Endothelial cell of umbilical vein (primary cell): ENCODE measurements at regions of chr2 and their contacts with region 1.

Region 1: DNA sequence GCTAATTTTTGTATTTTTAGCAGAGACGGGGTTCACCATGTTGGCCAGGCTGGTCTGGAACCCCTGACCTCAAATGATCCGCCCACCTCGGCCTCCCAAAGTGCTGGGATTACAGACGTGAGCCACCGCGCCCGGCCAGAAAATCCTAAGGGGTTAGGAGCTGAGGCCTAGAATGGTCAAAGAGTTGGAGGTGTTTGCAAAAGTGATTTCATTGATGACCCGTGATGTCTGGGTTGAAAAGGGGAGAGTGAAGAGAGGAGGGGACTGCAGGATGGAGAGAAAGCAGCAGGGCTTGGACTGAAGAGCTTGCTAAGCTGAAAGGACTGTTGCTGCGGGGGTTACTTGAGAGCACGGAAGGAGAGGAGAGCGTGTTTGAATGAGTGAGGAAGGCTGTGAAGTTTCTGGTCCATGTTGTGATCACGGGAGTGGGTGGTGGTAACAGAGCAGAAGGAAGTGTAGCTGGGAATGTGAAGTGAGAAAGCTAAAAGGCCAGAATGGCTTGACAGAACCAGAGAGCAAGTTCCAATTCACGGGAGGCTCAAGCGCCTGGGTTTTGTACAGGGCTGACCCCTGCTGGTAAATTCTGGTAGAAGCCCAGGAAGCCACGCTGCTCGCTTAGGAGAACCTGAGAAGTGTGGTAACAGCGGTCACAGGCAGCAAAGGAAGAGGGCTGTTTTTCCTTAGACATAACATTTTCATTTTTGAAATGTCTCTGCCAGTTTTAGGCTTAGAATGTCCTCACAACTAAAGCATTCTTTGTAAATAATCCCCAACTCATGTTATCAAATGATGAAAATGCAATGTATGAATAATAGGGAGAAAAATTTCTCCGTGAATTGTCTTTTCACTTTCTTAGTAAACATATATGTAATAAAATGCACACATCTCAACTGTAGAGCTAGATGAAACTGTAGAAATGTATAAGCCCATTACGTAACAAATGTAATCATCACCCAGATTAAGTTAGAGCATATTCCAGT is 40.5 kb upstream of the ACTR2 start:
- DNase-seq: peak; percentile 90
- H3K4me3 ChIP-seq: no peak overlapping the region
- H3K27ac ChIP-seq: no peak overlapping the region
- H3K4me1 ChIP-seq: peaks cover 13% of the 10 kb centered on the region
- H3K27me3 ChIP-seq: peaks cover 4 to 6% of the 10 kb centered on the region in 2 experiments
- CTCF ChIP-seq: peak; percentile 87 to 90
- POLR2A ChIP-seq: no peak

Region 2: DNA sequence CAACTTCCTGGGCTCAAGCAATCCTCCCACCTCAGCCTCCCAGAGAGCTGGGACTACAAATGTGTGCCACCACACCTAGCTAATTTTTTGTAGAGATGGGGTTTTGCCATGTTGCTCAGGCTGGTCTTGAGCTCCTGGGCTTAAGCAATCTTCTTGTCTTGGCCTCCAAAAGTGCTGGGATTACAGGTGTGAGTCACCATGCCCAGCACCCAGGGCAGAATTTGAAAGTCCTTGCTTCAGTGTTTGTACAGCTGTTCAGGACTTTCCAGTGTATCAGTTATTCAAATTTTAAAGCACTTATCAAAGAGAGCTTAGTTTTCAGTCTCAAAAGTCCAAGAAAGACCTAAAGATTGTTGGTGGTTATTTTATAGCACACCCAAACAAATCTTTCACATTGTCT is 1124.3 kb before region 1 on chr2:
- CTCF ChIA-PET with region 1: no interaction called
- POLR2A ChIA-PET with region 1: no interaction called
- dilution Hi-C with region 1: no loop called
- intact Hi-C with region 1: no loop called
- DNase-seq: peak; percentile 65
- H3K4me3 ChIP-seq: no peak overlapping the region
- H3K27ac ChIP-seq: peak overlapping the region; percentile 99
- H3K4me1 ChIP-seq: peaks cover 24% of the 10 kb centered on the region
- H3K27me3 ChIP-seq: no peaks in the 10 kb centered on the region
- CTCF ChIP-seq: no peak
- POLR2A ChIP-seq: no peak

Region 3: DNA sequence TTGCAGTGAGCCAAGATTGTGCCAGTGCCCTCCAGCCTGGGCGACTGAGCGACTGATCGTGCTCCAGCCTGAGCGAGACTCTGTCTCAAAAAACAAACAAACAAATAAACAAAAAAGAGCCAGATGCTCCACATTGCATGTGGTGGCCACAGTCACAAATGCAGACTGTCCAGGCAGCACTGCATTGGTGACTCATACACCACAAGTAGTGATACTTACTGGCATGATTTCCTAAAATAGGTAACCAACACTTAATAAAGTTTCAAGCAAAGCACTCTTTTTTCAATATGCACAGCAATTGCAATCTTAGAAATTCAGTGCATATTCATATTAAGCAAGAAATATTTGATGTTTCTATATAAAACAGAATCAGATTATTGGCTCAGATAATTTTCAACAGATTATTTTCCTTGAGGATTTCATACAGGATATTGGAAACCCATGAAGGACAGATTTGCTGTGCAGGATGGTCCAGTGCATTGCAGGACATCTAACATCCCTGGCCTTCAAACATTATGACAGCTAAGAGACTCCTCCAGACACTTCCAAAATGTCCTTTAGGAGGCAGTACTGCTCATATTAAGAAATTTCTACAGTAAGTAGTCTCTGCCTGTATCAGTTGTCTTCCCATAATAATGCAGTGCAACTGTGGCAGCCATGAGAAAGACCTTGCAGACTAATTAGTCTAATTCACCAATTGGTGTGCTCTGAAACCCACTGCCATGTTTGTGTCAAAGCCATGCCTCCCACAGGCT is 208.5 kb before region 1 on chr2:
- CTCF ChIA-PET with region 1: interaction called, 16 read pairs
- POLR2A ChIA-PET with region 1: no interaction called
- dilution Hi-C with region 1: no loop called
- intact Hi-C with region 1: no loop called
- DNase-seq: peak; percentile 30
- H3K4me3 ChIP-seq: no peak overlapping the region
- H3K27ac ChIP-seq: no peak overlapping the region
- H3K4me1 ChIP-seq: peaks cover 7% of the 10 kb centered on the region
- H3K27me3 ChIP-seq: peaks cover 0 to 2% of the 10 kb centered on the region in 2 experiments
- CTCF ChIP-seq: peak in 1 of 2 donors; percentile 22
- POLR2A ChIP-seq: no peak

Region 4: DNA sequence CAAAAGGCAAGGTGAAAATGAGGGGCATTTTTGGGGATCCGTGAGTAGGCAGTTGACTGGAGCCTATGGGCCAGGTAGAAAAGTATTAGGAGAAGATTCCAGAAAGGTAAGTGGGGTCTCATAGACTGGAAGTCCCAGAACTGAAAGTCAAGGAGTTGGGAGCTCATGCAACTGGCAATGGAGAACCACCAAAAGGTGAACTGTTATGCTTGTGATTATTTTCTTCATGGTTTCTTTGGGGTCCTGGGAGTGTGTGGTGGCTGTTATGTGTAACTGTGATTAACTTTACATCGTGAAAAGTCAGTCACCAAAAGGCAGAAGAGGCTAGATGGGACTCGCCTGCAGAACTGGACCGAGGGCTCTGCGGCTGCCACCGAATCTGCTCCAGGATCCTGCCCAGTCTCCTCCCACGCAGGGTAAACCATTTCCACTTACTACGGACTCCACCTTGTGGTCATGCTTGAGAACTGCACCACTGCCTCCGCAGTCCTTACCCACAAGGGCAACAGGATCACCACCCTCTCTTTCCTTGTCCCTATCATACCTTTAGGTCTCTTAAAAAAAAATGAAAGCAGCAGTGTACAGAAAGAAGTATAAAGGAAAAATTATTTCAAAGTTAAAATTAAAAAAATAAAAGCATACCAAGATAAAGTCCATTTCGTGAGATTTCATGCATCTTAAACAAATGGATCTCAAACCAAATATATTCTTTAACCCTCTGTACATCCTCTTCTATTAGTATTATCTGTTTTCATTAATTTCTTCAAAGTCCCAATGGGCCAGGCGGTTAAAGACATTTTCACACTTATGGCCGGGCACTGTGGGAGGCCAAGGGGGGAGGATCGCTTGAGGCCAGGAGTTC is 146.5 kb before region 1 on chr2:
- CTCF ChIA-PET with region 1: interaction called, 5 read pairs
- POLR2A ChIA-PET with region 1: no interaction called
- dilution Hi-C with region 1: no loop called
- intact Hi-C with region 1: loop called (anchors 1 kb)
- DNase-seq: peak; percentile 83
- H3K4me3 ChIP-seq: no peak overlapping the region
- H3K27ac ChIP-seq: no peak overlapping the region
- H3K4me1 ChIP-seq: peaks cover 11% of the 10 kb centered on the region
- H3K27me3 ChIP-seq: no peaks in the 10 kb centered on the region
- CTCF ChIP-seq: peak; percentile 82 to 91
- POLR2A ChIP-seq: no peak

Region 5: GRCh38 chr2:65129826-65130663 is 57.1 kb before region 1 on chr2 and contains the start of gene RAB1A:
- CTCF ChIA-PET with region 1: interaction called, 12 read pairs
- POLR2A ChIA-PET with region 1: no interaction called
- dilution Hi-C with region 1: no loop called
- intact Hi-C with region 1: loop called (anchors 2 kb)
- DNase-seq: peak; percentile 100
- H3K4me3 ChIP-seq: peak within 1 kb of the TSS; percentile 98 to 100 (median 100)
- H3K27ac ChIP-seq: peak within 1 kb of the TSS; percentile 87
- H3K4me1 ChIP-seq: peaks cover 33% of the 10 kb centered on the region
- H3K27me3 ChIP-seq: no peaks in the 10 kb centered on the region
- CTCF ChIP-seq: peak; percentile 8 to 55
- POLR2A ChIP-seq: peak; percentile 69
- total RNA-seq, gene RAB1A: 170 and 176 TPM in 2 replicates

Region 6: GRCh38 chr2:65227425-65228262 is 40.5 kb after region 1 on chr2 and contains the start of gene ACTR2:
- CTCF ChIA-PET with region 1: interaction called, 9 read pairs
- POLR2A ChIA-PET with region 1: no interaction called
- dilution Hi-C with region 1: no loop called
- intact Hi-C with region 1: loop called (anchors 2 kb)
- DNase-seq: peak; percentile 97
- H3K4me3 ChIP-seq: peak within 1 kb of the TSS; percentile 67 to 90 (median 74)
- H3K27ac ChIP-seq: peak within 1 kb of the TSS; percentile 80
- H3K4me1 ChIP-seq: peaks cover 31% of the 10 kb centered on the region
- H3K27me3 ChIP-seq: no peaks in the 10 kb centered on the region
- CTCF ChIP-seq: no peak
- POLR2A ChIP-seq: peak; percentile 87
- total RNA-seq, gene ACTR2: 287 and 301 TPM in 2 replicates

Region 7: GRCh38 chr2:65818873-65819451 is 631.8 kb after region 1 on chr2:
- CTCF ChIA-PET with region 1: no interaction called
- POLR2A ChIA-PET with region 1: no interaction called
- dilution Hi-C with region 1: no loop called
- intact Hi-C with region 1: no loop called
- DNase-seq: no peak
- H3K4me3 ChIP-seq: no peak overlapping the region
- H3K27ac ChIP-seq: no peak overlapping the region
- H3K4me1 ChIP-seq: no peaks in the 10 kb centered on the region
- H3K27me3 ChIP-seq: no peaks in the 10 kb centered on the region
- CTCF ChIP-seq: no peak
- POLR2A ChIP-seq: no peak